Transverse colon (tissue), 4 donors: ENCODE measurements at regions of chr1 and their contacts with region 1.

Region 1: GRCh38 chr1:13539683-13540082 is 25.9 kb upstream of the LRRC38 start:
- DNase-seq: no peak
- H3K4me3 ChIP-seq: no peak overlapping the region
- H3K27ac ChIP-seq: no peak overlapping the region
- H3K4me1 ChIP-seq: no peaks in the 10 kb centered on the region
- H3K27me3 ChIP-seq: no peaks in the 10 kb centered on the region
- CTCF ChIP-seq: no peak
- EP300 ChIP-seq: no peak
- POLR2A ChIP-seq: no peak

Region 2: GRCh38 chr1:12353981-12354380 is 1185.7 kb before region 1 on chr1:
- in situ Hi-C with region 1: no loop called
- intact Hi-C with region 1: loop called (anchors 5 kb)
- DNase-seq: no peak
- H3K4me3 ChIP-seq: no peak overlapping the region
- H3K27ac ChIP-seq: no peak overlapping the region
- H3K4me1 ChIP-seq: peaks cover 0 to 5% (median 0%) of the 10 kb centered on the region in 4 donors
- H3K27me3 ChIP-seq: no peaks in the 10 kb centered on the region
- CTCF ChIP-seq: no peak
- EP300 ChIP-seq: no peak
- POLR2A ChIP-seq: no peak

Region 3: DNA sequence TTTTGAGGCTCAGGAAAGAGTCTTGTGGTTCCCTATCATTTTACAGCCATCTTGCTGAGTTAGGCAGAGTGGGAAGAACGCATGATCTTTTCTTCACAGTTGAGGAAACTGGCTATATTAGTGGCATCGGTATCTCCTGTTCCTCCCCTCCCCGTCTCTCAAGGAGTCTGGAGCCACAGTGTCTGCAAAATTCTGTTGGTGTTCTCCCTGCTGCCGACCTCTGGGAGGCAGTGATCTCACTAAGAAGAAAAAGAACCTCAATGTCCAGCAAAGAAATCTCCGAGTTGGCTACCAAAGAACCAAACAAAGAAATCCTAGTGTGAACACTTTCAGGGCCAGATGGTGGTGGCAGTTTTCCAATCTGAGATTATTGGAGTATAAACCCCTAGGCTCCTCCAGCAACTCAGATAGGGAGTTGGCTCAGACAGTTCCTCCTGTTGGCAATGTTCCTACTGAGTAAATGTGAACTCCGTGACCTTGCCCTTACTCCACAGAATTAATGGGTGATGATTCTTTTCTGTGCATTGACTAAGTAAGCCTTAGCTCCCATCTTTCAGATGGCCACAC is 88.2 kb before region 1 on chr1:
- in situ Hi-C with region 1: no loop called
- intact Hi-C with region 1: no loop called
- DNase-seq: no peak
- H3K4me3 ChIP-seq: no peak overlapping the region
- H3K27ac ChIP-seq: no peak overlapping the region
- H3K4me1 ChIP-seq: no peaks in the 10 kb centered on the region
- H3K27me3 ChIP-seq: peaks cover 14% of the 10 kb centered on the region
- CTCF ChIP-seq: no peak
- EP300 ChIP-seq: no peak
- POLR2A ChIP-seq: no peak

Region 4: DNA sequence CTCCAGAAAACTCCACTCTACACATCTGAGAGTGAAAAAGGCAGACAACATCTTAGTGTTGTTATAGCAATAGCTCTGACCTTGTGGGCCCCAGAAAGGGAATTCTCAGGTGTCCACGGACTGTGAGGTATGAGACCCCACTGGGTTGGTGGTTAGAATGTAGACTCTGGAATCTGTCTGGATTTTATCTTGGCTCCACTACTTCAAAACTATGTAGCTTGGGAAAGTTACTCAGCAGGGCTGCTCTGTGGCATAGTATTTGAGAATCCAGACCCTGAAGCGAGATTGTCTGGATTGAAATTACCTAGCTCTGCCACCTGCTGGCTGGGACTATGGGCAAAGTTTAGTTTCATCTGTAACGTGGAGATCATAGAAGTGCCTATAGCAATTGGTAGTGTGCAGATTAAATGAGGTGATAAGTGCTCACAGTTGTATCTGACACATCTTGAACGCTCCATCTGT is 186.1 kb after region 1 on chr1:
- in situ Hi-C with region 1: no loop called
- intact Hi-C with region 1: no loop called
- DNase-seq: peak; percentile 59
- H3K4me3 ChIP-seq: no peak overlapping the region
- H3K27ac ChIP-seq: no peak overlapping the region
- H3K4me1 ChIP-seq: peaks cover 0 to 8% (median 3%) of the 10 kb centered on the region in 4 donors
- H3K27me3 ChIP-seq: no peaks in the 10 kb centered on the region
- CTCF ChIP-seq: peak; percentile 38 to 67 (median 51)
- EP300 ChIP-seq: no peak
- POLR2A ChIP-seq: no peak